ENCODE measurements at regions of chr5 and their contacts with region 1.

Region 1: DNA sequence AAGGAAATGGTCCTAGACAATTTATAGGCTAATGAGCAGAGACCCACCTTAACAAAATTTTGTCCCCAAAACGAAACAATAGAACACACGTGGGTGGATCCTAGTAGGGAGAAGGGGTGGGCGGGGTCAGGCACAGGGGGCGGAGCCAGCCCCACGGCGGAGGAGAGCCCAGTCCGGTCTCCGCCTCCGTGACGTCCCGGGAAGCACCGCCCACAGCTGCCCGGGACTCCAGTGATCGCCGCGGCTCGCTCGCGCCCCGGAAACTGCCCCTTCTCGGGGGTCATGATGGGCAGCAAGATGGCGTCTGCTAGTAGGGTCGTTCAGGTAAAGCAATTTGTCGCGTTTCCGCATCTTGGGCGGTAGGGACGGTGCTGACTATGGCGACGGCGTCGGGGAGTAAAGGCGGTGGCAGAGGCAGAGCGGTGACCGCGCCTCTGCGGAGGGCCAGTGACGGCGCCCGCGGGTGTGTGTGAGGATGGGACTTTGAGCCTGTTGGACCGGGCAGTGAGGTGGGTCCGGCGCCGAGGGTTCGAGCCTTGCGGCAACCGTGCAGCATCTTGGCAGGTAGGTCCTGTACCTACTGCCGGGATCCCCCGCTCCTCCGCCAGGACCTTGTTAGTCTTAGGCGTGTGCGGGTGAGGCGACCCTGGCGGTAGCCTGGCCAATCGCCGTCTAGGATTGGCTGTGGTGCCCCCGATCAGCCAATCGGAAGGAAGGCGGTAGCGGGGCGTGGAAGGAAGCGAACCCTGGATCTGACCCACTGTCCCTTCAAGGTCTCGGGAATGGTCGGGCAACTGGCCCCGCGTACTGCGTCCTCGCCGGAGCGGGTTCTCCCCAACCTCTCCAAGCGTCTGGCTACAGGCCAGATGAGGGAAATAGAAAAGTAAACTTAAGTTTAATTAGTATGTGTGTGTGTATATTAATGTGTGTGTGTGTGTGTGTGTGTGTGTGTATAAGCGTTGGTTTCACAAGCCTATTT is 16.8 kb upstream of the CDK7 start:
- DNase-seq: peak; percentile 86
- ATAC-seq: peak; percentile 98
- H3K4me3 ChIP-seq: peak overlapping the region; percentile 91
- H3K27ac ChIP-seq: peak overlapping the region; percentile 81
- H3K4me1 ChIP-seq: peaks cover 6% of the 10 kb centered on the region
- H3K27me3 ChIP-seq: no peaks in the 10 kb centered on the region
- CTCF ChIP-seq: no peak
- POLR2A ChIP-seq: peak; percentile 69; the same call in 1 of the 2 replicates
- RAD21 ChIP-seq: no peak

Region 2: DNA sequence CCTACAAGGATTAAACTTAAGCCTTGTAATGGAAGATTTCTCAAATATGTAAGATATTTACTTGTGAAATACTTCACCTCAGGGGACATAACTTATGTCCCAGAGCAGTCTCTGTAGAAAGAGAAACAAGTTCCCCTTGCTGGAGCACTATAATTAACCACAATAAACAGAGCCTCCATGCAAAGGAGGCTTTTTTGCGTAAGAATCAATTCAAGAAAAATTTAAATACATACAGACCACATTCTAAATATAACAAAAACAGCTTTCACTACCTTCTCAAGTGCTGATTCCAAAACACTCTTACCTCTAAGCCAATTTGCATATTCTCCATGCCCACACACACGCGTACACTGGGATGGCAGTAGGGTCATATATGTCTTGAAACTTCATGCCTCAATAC is 81.5 kb before region 1 on chr5:
- CTCF ChIA-PET with region 1: no interaction called
- POLR2A ChIA-PET with region 1: no interaction called
- dilution Hi-C with region 1: no loop called
- in situ Hi-C with region 1: no loop called
- intact Hi-C with region 1: no loop called
- DNase-seq: no peak
- ATAC-seq: peak; percentile 60
- H3K4me3 ChIP-seq: no peak overlapping the region
- H3K27ac ChIP-seq: no peak overlapping the region
- H3K4me1 ChIP-seq: no peaks in the 10 kb centered on the region
- H3K27me3 ChIP-seq: no peaks in the 10 kb centered on the region
- CTCF ChIP-seq: no peak
- POLR2A ChIP-seq: no peak
- RAD21 ChIP-seq: no peak

Region 3: DNA sequence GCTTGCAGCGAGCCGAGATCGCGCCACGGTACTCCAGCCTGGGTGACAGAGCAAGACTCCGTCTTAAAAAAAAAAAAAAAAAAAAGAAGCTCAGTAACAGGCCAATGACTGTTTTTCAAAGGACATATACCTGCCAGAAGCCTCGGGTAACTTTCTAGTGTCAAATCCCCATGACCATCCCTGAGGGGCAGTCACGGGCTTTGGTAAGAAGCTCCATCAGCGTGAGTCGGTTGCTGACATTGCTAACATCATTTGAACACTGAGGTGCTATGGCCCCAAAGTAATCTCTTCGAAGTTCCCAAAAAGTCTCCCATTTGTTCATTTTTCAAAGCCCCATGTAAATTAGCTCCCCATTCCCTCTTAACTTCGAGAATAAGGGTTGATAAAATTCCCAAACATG is 1795.7 kb after region 1 on chr5:
- CTCF ChIA-PET with region 1: interaction called, 10 read pairs
- POLR2A ChIA-PET with region 1: no interaction called
- dilution Hi-C with region 1: no loop called
- in situ Hi-C with region 1: no loop called
- intact Hi-C with region 1: no loop called
- DNase-seq: no peak
- ATAC-seq: no peak
- H3K4me3 ChIP-seq: no peak overlapping the region
- H3K27ac ChIP-seq: no peak overlapping the region
- H3K4me1 ChIP-seq: no peaks in the 10 kb centered on the region
- H3K27me3 ChIP-seq: no peaks in the 10 kb centered on the region; the same call in 1 of the 2 replicates
- CTCF ChIP-seq: no peak
- POLR2A ChIP-seq: no peak
- RAD21 ChIP-seq: no peak

Measured in IMR-90 (cell line).